ENCODE measurements at regions of chr1 and their contacts with region 1.

Region 1: DNA sequence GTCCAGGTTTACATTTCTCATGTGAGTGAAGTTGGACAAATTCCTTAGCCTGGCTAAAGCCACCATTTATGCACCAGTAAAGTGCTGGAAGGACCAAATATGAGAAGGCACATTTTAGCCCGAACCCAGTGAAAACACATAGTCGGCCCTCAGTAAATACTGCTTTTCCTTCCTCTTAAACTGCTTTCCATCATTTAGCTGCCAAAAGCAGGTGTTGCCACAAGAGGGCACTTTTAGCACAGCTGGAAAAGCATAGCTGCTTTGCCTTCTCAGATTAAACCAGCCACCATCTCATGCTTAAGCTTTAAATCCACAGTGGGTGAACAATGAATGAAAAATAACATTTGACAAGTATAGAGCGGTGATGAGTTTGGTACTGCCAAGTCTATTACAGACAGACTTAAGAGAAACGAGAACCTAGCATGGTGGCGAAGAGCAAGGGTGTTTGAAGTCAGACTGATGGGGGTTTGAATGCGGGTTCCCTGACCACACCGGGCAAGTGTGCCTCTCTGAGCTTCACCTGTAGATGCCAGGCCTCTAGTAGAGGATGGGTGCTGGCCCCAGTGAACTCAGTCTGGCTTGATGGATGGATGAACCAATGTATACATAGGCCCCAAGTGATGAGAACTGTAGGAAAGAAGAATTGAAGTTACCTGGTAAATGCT is 57.8 kb downstream of the SLC35D1 start:
- DNase-seq: peak; percentile 54 to 87 (median 62)
- H3K4me3 ChIP-seq: no peak overlapping the region
- H3K27ac ChIP-seq: no peak overlapping the region
- H3K4me1 ChIP-seq: no peaks in the 10 kb centered on the region
- H3K27me3 ChIP-seq: no peaks in the 10 kb centered on the region
- CTCF ChIP-seq: peak; percentile 52 to 78 (median 73)
- POLR2A ChIP-seq: no peak

Region 2: DNA sequence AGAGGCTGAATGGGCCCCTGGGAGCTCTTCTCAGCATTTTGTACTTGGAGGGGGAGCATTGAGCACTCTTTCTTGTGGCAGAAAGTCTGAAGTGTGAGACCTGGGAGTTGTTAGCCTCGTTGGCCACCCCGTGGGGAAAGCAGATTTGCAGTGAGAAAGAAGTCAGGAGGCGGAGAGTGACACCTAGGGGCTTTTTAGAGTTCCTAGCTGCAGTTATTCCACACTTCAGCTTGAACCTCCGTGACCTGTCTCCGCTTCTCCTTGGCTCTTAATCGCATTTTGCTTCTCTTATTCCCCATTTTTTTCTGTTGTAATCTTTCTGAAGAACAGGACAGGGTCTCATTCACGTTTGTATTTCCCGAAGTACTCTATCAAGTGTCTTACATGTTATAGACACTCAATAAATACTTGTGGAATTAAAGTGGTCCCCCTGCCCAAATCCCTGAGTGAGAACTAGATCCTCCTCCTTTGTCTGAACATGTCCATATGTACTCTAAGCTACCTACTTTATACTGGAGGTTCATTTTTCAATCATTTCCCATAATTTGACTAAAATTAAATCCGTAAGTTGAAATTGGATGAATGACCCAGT is 153.1 kb after region 1 on chr1:
- intact Hi-C with region 1: loop called (anchors 5 to 10 kb)
- DNase-seq: peak; percentile 69 to 85 (median 78)
- H3K4me3 ChIP-seq: peak overlapping the region in 1 of 4 donors; percentile 1
- H3K27ac ChIP-seq: no peak overlapping the region
- H3K4me1 ChIP-seq: peaks cover 0 to 6% of the 10 kb centered on the region in 2 donors
- H3K27me3 ChIP-seq: no peaks in the 10 kb centered on the region
- CTCF ChIP-seq: peak; percentile 37 to 95 (median 82)
- POLR2A ChIP-seq: no peak

Region 3: GRCh38 chr1:67214420-67215174 is 218.4 kb after region 1 on chr1:
- intact Hi-C with region 1: loop called in 1 of 2 experiments (anchors 10 kb)
- DNase-seq: peak in 6 of 7 donors; percentile 24 to 65 (median 45)
- H3K4me3 ChIP-seq: no peak overlapping the region
- H3K27ac ChIP-seq: no peak overlapping the region
- H3K4me1 ChIP-seq: no peaks in the 10 kb centered on the region
- H3K27me3 ChIP-seq: no peaks in the 10 kb centered on the region
- CTCF ChIP-seq: peak; percentile 33 to 53 (median 46)
- POLR2A ChIP-seq: no peak

Measured in adrenal gland (tissue), 19 donors.